Lower leg skin (tissue), 4 donors: ENCODE measurements at regions of chr12 and their contacts with region 1.

Region 1: GRCh38 chr12:54126696-54127537 is 61.9 kb downstream of the SMUG1 start:
- DNase-seq: peak; percentile 79 to 97
- H3K4me3 ChIP-seq: peak overlapping the region; percentile 68
- CTCF ChIP-seq: no peak
- POLR2A ChIP-seq: no peak

Region 2: DNA sequence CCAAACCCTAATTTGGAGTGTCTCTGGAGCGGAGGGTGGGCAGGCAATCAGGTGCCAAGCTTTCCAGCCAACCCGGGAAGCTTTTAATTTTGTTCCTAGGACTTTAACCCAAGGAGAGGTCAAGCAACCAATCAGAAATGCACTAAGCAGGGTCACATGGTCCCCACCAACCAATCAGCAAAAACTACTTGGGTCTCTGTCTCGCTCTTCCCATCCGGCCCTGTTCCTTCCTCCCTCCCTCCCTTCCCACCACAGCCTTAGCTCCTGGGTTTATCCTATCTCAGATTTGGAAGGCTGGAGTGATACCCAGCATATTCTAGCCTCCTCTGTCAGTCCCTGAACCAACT is 86.8 kb before region 1 on chr12:
- intact Hi-C with region 1: loop called (anchors 10 kb)
- DNase-seq: no peak
- H3K4me3 ChIP-seq: no peak overlapping the region
- CTCF ChIP-seq: no peak
- POLR2A ChIP-seq: no peak

Region 3: DNA sequence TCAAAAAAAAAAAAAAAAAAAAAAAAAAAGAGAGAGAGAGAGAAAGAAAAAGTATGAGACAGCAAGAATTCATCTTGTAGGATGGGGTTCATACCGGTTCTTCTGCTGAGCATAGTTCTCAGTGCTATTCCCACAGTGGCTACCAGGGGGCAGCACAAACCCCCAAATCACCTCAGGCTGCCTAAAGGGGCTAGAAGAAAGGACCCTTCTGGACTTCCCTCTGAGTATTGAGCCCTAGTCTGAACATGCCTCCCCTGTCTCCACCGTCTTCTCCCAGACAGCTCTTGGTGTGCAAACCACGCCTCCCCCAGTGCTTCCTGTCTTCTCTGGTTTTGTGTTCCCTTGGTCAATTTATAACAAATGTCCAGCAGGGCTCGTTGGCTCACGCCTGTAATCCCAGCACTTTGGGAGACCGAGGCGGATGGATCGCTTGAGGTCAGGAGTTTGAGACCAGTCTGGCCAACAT is 93.2 kb after region 1 on chr12:
- intact Hi-C with region 1: no loop called
- DNase-seq: peak; percentile 63 to 94
- H3K4me3 ChIP-seq: no peak overlapping the region
- CTCF ChIP-seq: peak in 1 of 3 donors; percentile 53
- POLR2A ChIP-seq: no peak